ENCODE measurements at regions of chr12 and their contacts with region 1.

Region 1: DNA sequence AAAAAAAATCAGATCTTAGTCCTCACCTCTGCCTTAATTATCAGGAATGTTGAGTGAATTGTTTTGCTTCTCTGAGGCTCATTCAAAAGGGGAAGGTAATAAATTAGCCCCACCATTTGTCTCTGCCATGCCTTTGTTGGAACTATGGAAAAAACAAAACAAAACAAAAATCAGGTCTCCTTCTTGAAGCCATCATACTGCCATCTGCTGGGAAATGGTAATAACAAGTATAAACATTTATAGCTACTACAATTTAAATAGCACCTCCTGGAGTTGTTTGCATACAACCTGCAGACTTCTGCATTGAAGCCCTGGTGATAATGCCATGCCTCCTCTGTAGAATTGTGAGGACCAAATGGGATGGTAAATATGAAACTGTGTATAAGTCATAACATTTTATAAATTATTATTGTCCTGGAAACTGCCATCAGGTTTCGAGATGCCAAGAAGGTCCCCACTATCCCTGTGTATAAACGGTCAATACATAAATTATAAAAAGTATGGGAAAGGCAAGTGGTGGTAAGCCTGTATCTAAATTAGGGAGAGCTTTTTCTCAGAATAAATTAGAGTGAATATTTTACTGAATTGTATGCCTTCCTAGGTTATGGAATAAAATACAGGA is 87.2 kb upstream of the FGD4 start:
- DNase-seq: peak; percentile 67
- ATAC-seq: peak; percentile 58
- H3K4me3 ChIP-seq: no peak overlapping the region
- H3K4me3 Mint-ChIP-seq: no peak overlapping the region
- H3K27ac ChIP-seq: no peak overlapping the region
- H3K27ac Mint-ChIP-seq: peak overlapping the region; percentile 86
- H3K4me1 ChIP-seq: peaks cover 0 to 6% of the 10 kb centered on the region in 2 donors
- H3K4me1 Mint-ChIP-seq: peaks cover 8% of the 10 kb centered on the region
- H3K27me3 ChIP-seq: no peaks in the 10 kb centered on the region
- H3K27me3 Mint-ChIP-seq: no peaks in the 10 kb centered on the region
- CTCF ChIP-seq: peak; percentile 76

Region 2: GRCh38 chr12:31647086-31647491 is 665.1 kb before region 1 on chr12:
- CTCF ChIA-PET with region 1: interaction called, 78 read pairs
- POLR2A ChIA-PET with region 1: interaction called, 5 read pairs
- intact Hi-C with region 1: no loop called
- DNase-seq: peak; percentile 44
- ATAC-seq: peak; percentile 28
- H3K4me3 ChIP-seq: no peak overlapping the region
- H3K4me3 Mint-ChIP-seq: peak overlapping the region; percentile 24
- H3K27ac ChIP-seq: no peak overlapping the region
- H3K27ac Mint-ChIP-seq: peak overlapping the region; percentile 38
- H3K4me1 ChIP-seq: peaks cover 21 to 22% of the 10 kb centered on the region in 2 donors
- H3K4me1 Mint-ChIP-seq: peaks cover 29% of the 10 kb centered on the region
- H3K27me3 ChIP-seq: no peaks in the 10 kb centered on the region
- H3K27me3 Mint-ChIP-seq: no peaks in the 10 kb centered on the region
- CTCF ChIP-seq: no peak

Region 3: GRCh38 chr12:32062881-32063280 is 249.3 kb before region 1 on chr12:
- CTCF ChIA-PET with region 1: interaction called, 51 read pairs
- POLR2A ChIA-PET with region 1: interaction called, 3 read pairs
- intact Hi-C with region 1: loop called (anchors 1 kb)
- DNase-seq: peak; percentile 8
- ATAC-seq: no peak
- H3K4me3 ChIP-seq: no peak overlapping the region
- H3K4me3 Mint-ChIP-seq: no peak overlapping the region
- H3K27ac ChIP-seq: no peak overlapping the region
- H3K27ac Mint-ChIP-seq: no peak overlapping the region
- H3K4me1 ChIP-seq: peaks cover 10 to 12% of the 10 kb centered on the region in 2 donors
- H3K4me1 Mint-ChIP-seq: peaks cover 13% of the 10 kb centered on the region
- H3K27me3 ChIP-seq: no peaks in the 10 kb centered on the region
- H3K27me3 Mint-ChIP-seq: no peaks in the 10 kb centered on the region
- CTCF ChIP-seq: no peak

Region 4: GRCh38 chr12:32273712-32274111 is 38.4 kb before region 1 on chr12:
- CTCF ChIA-PET with region 1: interaction called, 3 read pairs
- POLR2A ChIA-PET with region 1: no interaction called
- intact Hi-C with region 1: loop called (anchors 5 kb)
- DNase-seq: peak; percentile 81
- ATAC-seq: peak; percentile 96
- H3K4me3 ChIP-seq: peak overlapping the region in 2 of 5 experiments; percentile 23 to 28
- H3K4me3 Mint-ChIP-seq: peak overlapping the region; percentile 79
- H3K27ac ChIP-seq: peak overlapping the region; percentile 88 to 95
- H3K27ac Mint-ChIP-seq: peak overlapping the region; percentile 98
- H3K4me1 ChIP-seq: peaks cover 38 to 40% of the 10 kb centered on the region in 2 donors
- H3K4me1 Mint-ChIP-seq: peaks cover 36% of the 10 kb centered on the region
- H3K27me3 ChIP-seq: no peaks in the 10 kb centered on the region
- H3K27me3 Mint-ChIP-seq: no peaks in the 10 kb centered on the region
- CTCF ChIP-seq: no peak

Region 5: GRCh38 chr12:32505067-32505945 is 193.1 kb after region 1 on chr12:
- CTCF ChIA-PET with region 1: no interaction called
- POLR2A ChIA-PET with region 1: no interaction called
- intact Hi-C with region 1: no loop called
- DNase-seq: no peak
- ATAC-seq: no peak
- H3K4me3 ChIP-seq: no peak overlapping the region
- H3K4me3 Mint-ChIP-seq: no peak overlapping the region
- H3K27ac ChIP-seq: no peak overlapping the region
- H3K27ac Mint-ChIP-seq: no peak overlapping the region
- H3K4me1 ChIP-seq: no peaks in the 10 kb centered on the region
- H3K4me1 Mint-ChIP-seq: peaks cover 2% of the 10 kb centered on the region
- H3K27me3 ChIP-seq: no peaks in the 10 kb centered on the region
- H3K27me3 Mint-ChIP-seq: no peaks in the 10 kb centered on the region
- CTCF ChIP-seq: no peak

Region 6: GRCh38 chr12:34022079-34022830 is 1710.1 kb after region 1 on chr12 and contains the start of gene ALG10:
- CTCF ChIA-PET with region 1: interaction called, 3 read pairs
- POLR2A ChIA-PET with region 1: no interaction called
- intact Hi-C with region 1: loop called (anchors 1 kb)
- DNase-seq: peak; percentile 97
- ATAC-seq: peak; percentile 96
- H3K4me3 ChIP-seq: peak within 1 kb of the TSS; percentile 47 to 90 (median 79)
- H3K4me3 Mint-ChIP-seq: peak within 1 kb of the TSS; percentile 96
- H3K27ac ChIP-seq: peak within 1 kb of the TSS; percentile 89 to 90
- H3K27ac Mint-ChIP-seq: peak within 1 kb of the TSS; percentile 96
- H3K4me1 ChIP-seq: peaks cover 6 to 8% of the 10 kb centered on the region in 2 donors
- H3K4me1 Mint-ChIP-seq: peaks cover 19% of the 10 kb centered on the region
- H3K27me3 ChIP-seq: no peaks in the 10 kb centered on the region
- H3K27me3 Mint-ChIP-seq: peaks cover 2% of the 10 kb centered on the region
- CTCF ChIP-seq: peak; percentile 78
- total RNA-seq, gene ALG10: 15.8 and 17.0 TPM in 2 replicates